Activated naive CD4-positive, alpha-beta T cell treated with anti-CD3 and anti-CD28 coated beads for 36 hours (primary cell): ENCODE measurements at regions of chr5 and their contacts with region 1.

Region 1: GRCh38 chr5:98768160-98769005 is 5.1 kb upstream of the RGMB start:
- DNase-seq: peak; percentile 61
- H3K4me3 Mint-ChIP-seq: peak overlapping the region; percentile 91
- H3K27ac Mint-ChIP-seq: no peak overlapping the region
- H3K4me1 Mint-ChIP-seq: peaks cover 17% of the 10 kb centered on the region
- H3K27me3 Mint-ChIP-seq: peaks cover 30% of the 10 kb centered on the region

Region 2: GRCh38 chr5:97425511-97425910 is 1342.9 kb before region 1 on chr5:
- CTCF ChIA-PET with region 1: no interaction called
- intact Hi-C with region 1: loop called (anchors 10 kb)
- DNase-seq: peak; percentile 14
- H3K4me3 Mint-ChIP-seq: no peak overlapping the region
- H3K27ac Mint-ChIP-seq: no peak overlapping the region
- H3K4me1 Mint-ChIP-seq: no peaks in the 10 kb centered on the region
- H3K27me3 Mint-ChIP-seq: no peaks in the 10 kb centered on the region

Region 3: GRCh38 chr5:97714424-97714823 is 1054.0 kb before region 1 on chr5:
- CTCF ChIA-PET with region 1: no interaction called
- intact Hi-C with region 1: no loop called
- DNase-seq: no peak
- H3K4me3 Mint-ChIP-seq: no peak overlapping the region
- H3K27ac Mint-ChIP-seq: no peak overlapping the region
- H3K4me1 Mint-ChIP-seq: no peaks in the 10 kb centered on the region
- H3K27me3 Mint-ChIP-seq: no peaks in the 10 kb centered on the region

Region 4: GRCh38 chr5:98163796-98164493 is 604.4 kb before region 1 on chr5:
- CTCF ChIA-PET with region 1: no interaction called
- intact Hi-C with region 1: no loop called
- DNase-seq: no peak
- H3K4me3 Mint-ChIP-seq: no peak overlapping the region
- H3K27ac Mint-ChIP-seq: no peak overlapping the region
- H3K4me1 Mint-ChIP-seq: no peaks in the 10 kb centered on the region
- H3K27me3 Mint-ChIP-seq: no peaks in the 10 kb centered on the region

Region 5: GRCh38 chr5:98780390-98780789 is 12.0 kb after region 1 on chr5:
- CTCF ChIA-PET with region 1: interaction called, 155 read pairs
- intact Hi-C with region 1: no loop called
- DNase-seq: no peak
- H3K4me3 Mint-ChIP-seq: no peak overlapping the region
- H3K27ac Mint-ChIP-seq: no peak overlapping the region
- H3K4me1 Mint-ChIP-seq: peaks cover 40% of the 10 kb centered on the region
- H3K27me3 Mint-ChIP-seq: no peaks in the 10 kb centered on the region

Region 6: GRCh38 chr5:98827161-98827560 is 58.8 kb after region 1 on chr5:
- CTCF ChIA-PET with region 1: interaction called, 4 read pairs
- intact Hi-C with region 1: loop called (anchors 2 kb)
- DNase-seq: peak; percentile 13
- H3K4me3 Mint-ChIP-seq: no peak overlapping the region
- H3K27ac Mint-ChIP-seq: no peak overlapping the region
- H3K4me1 Mint-ChIP-seq: no peaks in the 10 kb centered on the region
- H3K27me3 Mint-ChIP-seq: no peaks in the 10 kb centered on the region

Region 7: DNA sequence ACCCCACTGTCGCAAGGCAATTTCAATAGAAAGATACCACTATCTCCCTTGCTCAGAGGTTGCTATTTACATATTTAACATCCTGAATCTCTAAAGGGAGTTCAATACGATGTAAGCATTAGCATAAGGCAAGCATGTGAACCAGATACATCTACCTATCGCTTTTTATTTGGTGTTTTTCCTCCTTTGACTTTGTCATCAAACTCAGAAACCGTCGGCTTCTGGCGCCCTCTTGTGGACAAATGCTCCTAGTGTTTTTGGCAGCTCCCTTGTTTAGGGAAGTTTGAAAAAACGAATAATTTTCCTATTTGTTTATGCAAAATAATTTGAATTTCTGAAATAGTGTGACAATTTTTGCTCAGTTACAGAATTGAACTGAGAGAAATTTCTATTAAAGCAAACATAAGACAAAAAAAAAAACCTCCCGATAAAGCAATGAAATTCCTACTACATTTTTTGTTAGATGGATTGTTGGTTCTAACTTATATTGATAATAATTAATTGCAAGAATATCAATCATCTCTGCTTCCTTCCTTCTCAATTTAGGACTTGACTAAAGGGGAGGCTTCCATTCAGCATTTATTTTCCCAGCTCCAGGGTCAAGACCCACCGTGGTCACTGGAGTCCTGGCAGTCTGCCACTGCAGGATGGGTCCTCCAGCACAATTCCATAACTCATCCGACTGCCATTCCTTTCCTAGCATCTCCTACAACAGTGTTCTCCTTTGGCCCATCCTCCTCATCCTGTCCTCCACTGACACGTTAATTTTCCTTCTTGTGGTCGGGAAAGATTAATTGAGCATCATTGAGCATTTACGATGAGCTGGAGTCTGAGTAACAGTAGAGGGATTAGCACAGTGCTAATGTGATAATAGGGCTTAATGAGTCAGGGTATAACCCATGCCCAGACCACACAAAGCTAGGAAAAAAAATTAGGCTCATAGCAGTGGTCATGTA is 292.2 kb after region 1 on chr5:
- CTCF ChIA-PET with region 1: interaction called, 12 read pairs
- intact Hi-C with region 1: loop called (anchors 1 kb)
- DNase-seq: peak; percentile 92
- H3K4me3 Mint-ChIP-seq: no peak overlapping the region
- H3K27ac Mint-ChIP-seq: no peak overlapping the region
- H3K4me1 Mint-ChIP-seq: peaks cover 1% of the 10 kb centered on the region
- H3K27me3 Mint-ChIP-seq: no peaks in the 10 kb centered on the region